AG04449 (cell line): ENCODE measurements at regions of chr7 and their contacts with region 1.

Region 1: DNA sequence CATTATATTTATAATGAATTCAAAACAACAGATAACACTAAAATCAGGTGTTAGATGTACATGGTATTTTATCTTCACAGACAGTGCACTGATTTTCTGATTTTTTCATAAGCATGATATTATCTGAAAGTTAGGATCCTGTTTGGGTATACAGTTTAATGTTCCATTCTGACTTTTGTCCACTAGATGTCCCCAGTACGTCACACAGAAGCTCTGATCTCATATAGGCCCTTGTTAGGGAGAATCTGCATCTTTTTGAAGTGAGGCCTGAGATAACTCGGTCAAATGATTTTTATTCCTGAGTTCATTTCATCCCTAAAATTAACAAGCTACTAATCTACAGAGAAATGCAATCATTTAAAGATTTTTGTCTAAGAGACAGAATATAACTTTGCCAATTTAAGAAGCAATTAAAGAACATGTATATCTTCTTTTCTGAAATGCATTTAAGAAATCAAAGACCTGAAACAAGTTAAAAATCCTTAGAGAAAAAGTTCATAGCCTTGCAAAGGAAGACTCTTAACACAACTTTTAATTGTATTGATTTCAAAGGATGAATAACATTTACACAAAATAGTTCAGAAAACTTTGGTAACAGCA is 72.0 kb upstream of the TES start:
- DNase-seq: peak; percentile 23
- H3K4me3 ChIP-seq: no peak overlapping the region
- CTCF ChIP-seq: peak; percentile 64

Region 2: GRCh38 chr7:116122972-116123595 is 15.2 kb before region 1 on chr7:
- CTCF ChIA-PET with region 1: interaction called, 11 read pairs
- POLR2A ChIA-PET with region 1: no interaction called
- DNase-seq: peak; percentile 10
- H3K4me3 ChIP-seq: no peak overlapping the region
- CTCF ChIP-seq: peak; percentile 45

Region 3: GRCh38 chr7:116159711-116160110 is 21.4 kb after region 1 on chr7:
- CTCF ChIA-PET with region 1: interaction called, 14 read pairs
- POLR2A ChIA-PET with region 1: no interaction called
- DNase-seq: no peak
- H3K4me3 ChIP-seq: no peak overlapping the region
- CTCF ChIP-seq: no peak

Region 4: DNA sequence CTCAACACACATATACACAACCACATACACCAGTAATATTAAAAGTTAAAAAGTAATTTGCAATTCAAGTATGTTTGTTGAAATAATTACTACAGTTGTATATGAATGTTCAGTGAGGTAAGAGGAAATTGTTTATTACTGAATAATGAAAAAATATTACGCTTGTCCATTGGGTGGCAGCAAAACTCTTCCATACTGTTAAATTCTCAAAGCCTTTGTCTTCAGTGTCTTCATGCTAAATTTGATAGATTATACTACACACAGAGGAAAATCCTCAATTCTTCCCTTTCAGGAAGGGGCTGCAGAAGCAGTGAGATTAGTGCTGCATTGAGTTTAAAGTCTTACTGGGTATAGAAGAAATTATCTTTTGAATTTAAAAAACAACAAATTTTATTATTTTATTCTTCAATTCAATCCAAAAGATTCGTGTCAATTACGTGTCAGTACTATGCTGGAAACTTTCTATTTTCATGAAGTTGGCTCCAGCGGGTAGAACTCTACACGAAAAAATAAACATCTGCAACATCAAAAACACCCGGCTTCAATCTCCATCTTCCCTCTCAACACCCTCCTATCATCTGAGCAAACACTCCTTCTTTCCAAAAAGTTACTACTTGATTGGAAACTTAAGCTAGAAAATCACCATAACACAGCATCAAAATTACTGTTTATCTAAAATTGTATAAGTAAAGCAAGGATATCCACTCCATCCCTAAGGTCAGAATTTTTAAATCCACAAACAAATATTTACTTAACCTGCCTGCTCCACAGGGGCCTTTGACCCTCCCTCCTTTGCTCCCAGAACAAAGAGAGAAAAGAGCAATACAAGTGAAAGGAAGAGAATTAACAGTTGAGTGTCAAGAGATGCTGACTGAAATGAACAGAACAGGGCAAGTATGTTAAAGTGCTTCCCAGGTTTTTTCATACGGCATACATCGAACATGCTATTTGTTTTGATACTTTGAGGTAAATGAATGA is 35.0 kb after region 1 on chr7:
- CTCF ChIA-PET with region 1: interaction called, 23 read pairs
- POLR2A ChIA-PET with region 1: no interaction called
- DNase-seq: no peak
- H3K4me3 ChIP-seq: no peak overlapping the region
- CTCF ChIP-seq: no peak

Region 5: GRCh38 chr7:116242178-116242577 is 103.9 kb after region 1 on chr7:
- CTCF ChIA-PET with region 1: interaction called, 36 read pairs
- POLR2A ChIA-PET with region 1: no interaction called
- DNase-seq: no peak
- H3K4me3 ChIP-seq: no peak overlapping the region
- CTCF ChIP-seq: no peak

Region 6: DNA sequence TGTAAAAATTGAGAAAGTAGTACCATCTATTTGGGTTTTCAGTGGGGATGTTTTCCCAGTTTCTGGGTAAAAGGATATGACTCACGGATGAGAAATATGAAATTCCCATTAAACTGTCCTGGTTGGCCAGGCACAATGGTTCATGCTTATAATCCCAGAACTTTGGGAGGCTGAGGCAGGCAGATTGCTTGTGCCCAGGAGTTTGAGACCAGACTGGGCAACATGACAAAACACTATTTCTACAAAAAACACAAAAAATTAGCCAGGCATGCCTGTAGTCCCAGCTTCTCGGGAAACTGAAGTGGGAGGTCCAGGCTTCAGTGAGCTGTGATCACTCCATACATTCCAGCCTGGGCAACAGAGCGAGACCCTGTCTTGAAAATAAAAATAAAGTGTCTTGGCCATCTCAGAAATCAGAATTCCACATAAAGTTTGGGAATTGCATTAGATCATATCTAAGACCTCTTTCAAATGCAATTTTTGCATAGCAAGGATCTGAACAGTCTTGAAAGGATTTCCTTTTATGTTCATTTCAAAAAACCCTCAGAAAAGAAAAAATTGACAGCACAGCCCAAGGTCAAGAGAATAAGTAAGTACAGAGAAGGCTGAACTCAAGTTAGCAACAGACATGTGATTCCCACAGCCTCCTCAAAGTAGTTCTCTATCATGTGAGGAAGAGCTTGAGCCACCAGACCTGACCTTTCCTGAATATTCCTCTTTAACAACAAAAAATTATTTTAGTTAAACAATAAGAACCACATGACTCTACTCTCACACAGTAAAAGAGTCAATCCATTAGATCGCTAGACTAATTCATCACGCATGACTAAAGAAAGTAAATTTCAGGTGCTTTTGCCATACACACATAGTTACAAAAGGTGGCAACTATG is 219.7 kb after region 1 on chr7:
- CTCF ChIA-PET with region 1: no interaction called
- POLR2A ChIA-PET with region 1: no interaction called
- DNase-seq: no peak
- H3K4me3 ChIP-seq: no peak overlapping the region
- CTCF ChIP-seq: no peak

Region 7: DNA sequence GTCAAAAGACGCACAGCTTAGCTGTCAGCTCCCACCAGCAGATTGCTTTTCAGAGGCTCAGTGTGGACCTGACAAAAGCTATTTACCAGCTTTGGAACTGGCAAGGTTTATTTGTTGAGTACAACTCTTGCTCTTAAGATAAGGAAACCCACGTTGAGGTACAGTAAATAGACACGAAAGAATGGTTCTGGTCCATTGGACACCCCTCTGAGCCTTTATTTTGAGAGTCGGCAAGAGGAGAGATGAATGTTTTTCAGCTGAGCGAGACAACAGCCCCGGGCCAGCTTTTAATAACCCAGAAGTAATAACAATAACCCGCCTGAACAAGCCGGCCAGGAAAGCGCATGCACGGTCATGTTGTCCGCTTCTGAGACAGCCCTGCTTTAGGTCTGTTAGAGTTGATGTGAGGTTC is 1135.5 kb after region 1 on chr7:
- CTCF ChIA-PET with region 1: no interaction called
- POLR2A ChIA-PET with region 1: no interaction called
- DNase-seq: no peak
- H3K4me3 ChIP-seq: no peak overlapping the region
- CTCF ChIP-seq: no peak